ENCODE measurements at regions of chr5 and their contacts with region 1.

Region 1: DNA sequence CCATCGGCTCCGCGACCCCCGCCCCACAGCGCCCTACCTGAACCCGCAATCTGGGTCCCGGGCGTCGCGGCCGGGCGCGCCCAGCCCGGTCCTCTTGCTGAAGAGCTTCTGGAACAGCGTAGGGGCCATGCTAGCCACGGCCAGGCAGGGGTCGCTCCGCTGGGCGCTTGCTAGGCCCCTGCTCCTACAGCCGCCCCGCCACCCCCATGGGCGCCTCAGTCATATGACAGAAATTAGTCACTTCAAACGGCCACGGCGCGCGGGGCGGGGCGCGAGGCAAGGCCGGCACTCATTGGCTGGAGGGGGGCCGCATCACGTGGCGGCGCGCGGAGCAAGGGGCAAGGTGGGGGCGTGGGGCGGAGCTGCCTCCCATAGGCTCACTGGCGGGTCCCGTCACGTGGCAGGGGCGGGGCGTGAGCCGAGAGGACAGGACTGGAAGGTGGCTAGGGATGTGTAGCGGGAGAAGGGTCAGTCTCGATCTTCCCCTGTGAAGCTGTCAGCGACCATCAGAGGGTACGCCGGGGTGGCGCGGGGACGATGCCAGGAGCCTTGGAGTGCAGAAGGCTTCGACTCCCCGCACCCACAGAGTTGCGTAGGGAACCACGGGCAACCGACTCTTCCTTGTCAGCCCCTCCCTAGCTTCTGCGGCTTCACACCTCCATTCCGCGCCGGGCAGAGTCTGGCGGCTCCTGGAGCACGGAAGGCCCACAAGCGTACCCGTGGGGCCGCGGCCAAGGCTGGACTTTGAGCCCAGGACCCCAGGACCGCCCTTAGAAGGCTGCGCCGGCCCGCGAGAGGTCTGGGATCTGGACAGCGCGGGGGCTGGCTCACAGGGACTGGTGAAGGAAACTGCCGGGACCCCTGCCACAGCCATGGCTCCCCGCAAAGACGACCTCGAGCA is at the start of gene FNIP1:
- DNase-seq: peak; percentile 99
- ATAC-seq: peak; percentile 98
- H3K4me3 Mint-ChIP-seq: peak within 1 kb of the TSS; percentile 99
- H3K27ac Mint-ChIP-seq: peak within 1 kb of the TSS; percentile 91
- H3K4me1 Mint-ChIP-seq: peaks cover 28% of the 10 kb centered on the region
- H3K27me3 Mint-ChIP-seq: no peaks in the 10 kb centered on the region
- total RNA-seq, gene FNIP1: 14.2 to 16.3 TPM

Region 2: GRCh38 chr5:131263648-131264450 is 533.2 kb before region 1 on chr5 and contains the start of gene CDC42SE2:
- CTCF ChIA-PET with region 1: no interaction called
- POLR2A ChIA-PET with region 1: no interaction called
- intact Hi-C with region 1: loop called (anchors 5 to 10 kb)
- DNase-seq: peak; percentile 91
- ATAC-seq: peak; percentile 86
- H3K4me3 Mint-ChIP-seq: peak within 1 kb of the TSS; percentile 81
- H3K27ac Mint-ChIP-seq: peak within 1 kb of the TSS; percentile 96
- H3K4me1 Mint-ChIP-seq: peaks cover 44% of the 10 kb centered on the region
- H3K27me3 Mint-ChIP-seq: no peaks in the 10 kb centered on the region
- total RNA-seq, gene CDC42SE2: 68.3 to 99.6 TPM

Region 3: GRCh38 chr5:131394128-131394527 is 402.9 kb before region 1 on chr5:
- CTCF ChIA-PET with region 1: no interaction called
- POLR2A ChIA-PET with region 1: no interaction called
- intact Hi-C with region 1: no loop called
- DNase-seq: peak; percentile 68
- ATAC-seq: peak; percentile 68
- H3K4me3 Mint-ChIP-seq: peak overlapping the region; percentile 65
- H3K27ac Mint-ChIP-seq: peak overlapping the region; percentile 97
- H3K4me1 Mint-ChIP-seq: peaks cover 85% of the 10 kb centered on the region
- H3K27me3 Mint-ChIP-seq: no peaks in the 10 kb centered on the region

Region 4: GRCh38 chr5:131589510-131590348 is 207.3 kb before region 1 on chr5:
- CTCF ChIA-PET with region 1: interaction called, 7 read pairs
- POLR2A ChIA-PET with region 1: interaction called, 3 read pairs
- intact Hi-C with region 1: loop called (anchors 2 kb)
- DNase-seq: peak; percentile 13
- ATAC-seq: peak; percentile 74
- H3K4me3 Mint-ChIP-seq: no peak overlapping the region
- H3K27ac Mint-ChIP-seq: no peak overlapping the region
- H3K4me1 Mint-ChIP-seq: peaks cover 40% of the 10 kb centered on the region
- H3K27me3 Mint-ChIP-seq: no peaks in the 10 kb centered on the region

Region 5: DNA sequence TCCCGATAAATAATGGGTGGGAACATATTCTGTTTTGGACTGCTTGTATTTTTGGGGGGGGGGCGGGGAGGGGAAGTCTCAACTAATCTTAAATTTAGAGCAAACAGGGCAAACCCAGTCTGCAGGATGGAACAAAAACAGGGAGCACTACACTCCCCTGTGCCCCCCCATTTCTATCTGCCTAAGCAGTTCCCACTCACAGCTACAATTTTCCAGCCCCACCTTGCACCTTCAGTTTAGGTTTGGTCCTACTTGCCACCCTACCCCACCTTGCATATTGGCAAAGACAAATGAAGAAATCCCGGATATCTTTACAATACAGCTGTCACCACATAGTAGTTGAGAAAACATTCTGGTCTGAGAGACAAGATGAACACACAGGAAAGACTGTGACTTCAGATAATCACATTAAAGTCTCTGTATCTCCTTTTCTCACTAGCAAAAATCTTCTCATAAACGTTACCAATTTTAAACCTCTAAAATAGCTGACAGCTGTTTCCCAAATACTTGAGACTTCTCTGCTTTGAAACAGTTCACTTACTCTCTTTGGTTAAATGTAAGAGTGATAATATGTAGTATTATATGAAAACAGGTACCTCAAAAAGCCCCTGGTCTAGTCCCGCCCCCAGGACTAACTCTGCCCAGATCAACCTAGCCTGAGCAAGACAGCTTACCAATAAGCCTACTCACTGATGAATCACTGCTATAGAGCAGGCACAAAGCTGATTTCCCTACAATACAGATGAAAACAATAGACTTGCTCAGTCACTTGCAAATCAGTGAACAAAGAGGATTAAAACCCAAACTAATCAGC is 156.8 kb before region 1 on chr5:
- CTCF ChIA-PET with region 1: no interaction called
- POLR2A ChIA-PET with region 1: no interaction called
- intact Hi-C with region 1: loop called (anchors 1 kb)
- DNase-seq: peak; percentile 85
- ATAC-seq: peak; percentile 97
- H3K4me3 Mint-ChIP-seq: peak overlapping the region; percentile 24
- H3K27ac Mint-ChIP-seq: peak overlapping the region; percentile 88
- H3K4me1 Mint-ChIP-seq: peaks cover 28% of the 10 kb centered on the region
- H3K27me3 Mint-ChIP-seq: no peaks in the 10 kb centered on the region

Region 6: DNA sequence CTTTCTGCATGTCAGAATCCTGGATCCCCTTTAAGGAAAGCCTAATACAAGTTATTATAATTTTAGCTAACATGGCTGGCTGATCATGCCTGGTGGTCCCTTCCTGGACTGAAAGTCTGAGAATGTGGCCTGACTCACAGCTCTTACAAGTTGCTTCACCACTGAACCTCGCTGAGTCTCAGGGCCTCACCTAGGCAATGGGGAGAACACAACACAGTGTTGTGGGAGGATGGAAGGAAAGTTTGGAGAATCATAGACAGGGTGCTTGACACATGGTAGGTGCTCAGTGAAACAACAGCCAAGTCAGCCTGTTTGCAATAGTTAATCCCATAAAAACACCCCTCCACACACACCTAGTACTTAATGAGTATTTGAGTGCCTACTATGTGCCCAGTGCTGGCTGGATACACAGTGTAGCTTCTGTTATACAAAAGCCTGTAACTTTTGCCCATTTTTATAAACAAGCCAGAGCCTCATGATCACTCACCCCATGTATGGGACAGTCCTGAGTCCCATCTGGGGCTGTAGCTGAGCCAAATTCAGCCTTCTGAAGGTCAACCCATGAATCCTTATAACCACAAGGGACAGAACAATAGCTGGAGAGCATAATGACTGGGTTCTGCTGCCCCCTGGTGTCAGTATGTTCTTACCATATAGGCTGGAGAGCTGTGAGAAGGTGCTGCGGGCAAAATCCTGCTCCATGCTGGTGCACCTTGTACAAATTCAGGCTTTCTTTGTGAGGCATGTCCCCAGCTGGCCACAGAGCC is 210.5 kb after region 1 on chr5:
- CTCF ChIA-PET with region 1: interaction called, 4 read pairs
- POLR2A ChIA-PET with region 1: no interaction called
- intact Hi-C with region 1: loop called (anchors 5 kb)
- DNase-seq: peak; percentile 90
- ATAC-seq: peak; percentile 79
- H3K4me3 Mint-ChIP-seq: no peak overlapping the region
- H3K27ac Mint-ChIP-seq: no peak overlapping the region
- H3K4me1 Mint-ChIP-seq: peaks cover 21% of the 10 kb centered on the region
- H3K27me3 Mint-ChIP-seq: peaks cover 28% of the 10 kb centered on the region

Region 7: DNA sequence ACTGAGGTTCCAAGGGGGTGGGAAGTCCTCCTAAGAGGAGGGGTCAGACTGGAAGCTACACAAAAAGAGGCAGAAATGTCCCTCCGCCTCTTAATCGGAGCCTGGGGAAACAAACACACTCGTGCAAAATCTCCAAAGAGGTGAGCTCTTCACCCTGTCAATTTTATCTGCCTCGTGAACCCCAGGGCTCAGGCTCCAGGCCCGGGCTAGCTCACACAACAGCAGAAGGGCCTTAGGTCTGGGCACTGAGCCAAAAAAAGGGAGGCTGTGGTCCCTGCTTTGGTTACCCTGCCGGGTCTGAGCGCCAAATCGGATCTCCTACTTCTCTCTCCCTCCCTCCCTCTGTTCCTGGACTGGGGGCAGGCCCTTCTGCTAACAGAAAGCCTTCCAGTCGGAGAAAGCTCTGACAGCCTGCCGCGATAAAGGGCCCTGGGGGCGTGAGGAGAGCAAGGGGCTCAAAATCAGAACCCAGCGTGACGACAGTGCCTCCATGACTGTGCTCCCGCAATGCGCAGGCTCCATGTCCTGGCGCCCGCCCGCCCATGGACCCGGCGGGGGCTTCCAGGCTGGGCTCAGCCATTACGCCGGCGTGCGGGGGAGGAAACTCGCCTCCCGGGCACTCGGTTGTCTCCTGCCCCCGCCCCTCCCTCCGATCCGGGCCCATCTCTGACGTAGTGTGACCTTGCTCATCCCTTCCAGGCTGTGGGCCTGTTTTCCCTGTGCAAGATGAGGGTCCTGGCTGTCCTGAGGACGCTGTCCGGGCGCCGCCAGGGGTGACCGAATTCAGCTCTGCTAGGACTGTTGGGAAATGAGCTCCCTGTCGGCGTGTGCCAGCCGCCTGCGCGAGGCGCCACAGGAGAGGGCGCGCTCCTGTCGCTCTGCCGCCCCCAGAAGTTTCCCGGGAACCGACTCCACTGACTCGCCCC is 496.3 kb after region 1 on chr5:
- CTCF ChIA-PET with region 1: no interaction called
- POLR2A ChIA-PET with region 1: no interaction called
- intact Hi-C with region 1: loop called in 1 of 2 experiments (anchors 2 kb)
- DNase-seq: peak; percentile 89
- ATAC-seq: peak; percentile 45
- H3K4me3 Mint-ChIP-seq: peak overlapping the region; percentile 88
- H3K27ac Mint-ChIP-seq: peak overlapping the region; percentile 94
- H3K4me1 Mint-ChIP-seq: peaks cover 22% of the 10 kb centered on the region
- H3K27me3 Mint-ChIP-seq: peaks cover 10% of the 10 kb centered on the region

Measured in activated CD4-positive, alpha-beta T cell treated with anti-CD3 and anti-CD28 coated beads for 36 hours (primary cell).